Ovary (tissue), 10 donors: ENCODE measurements at regions of chr11 and their contacts with region 1.

Region 1: DNA sequence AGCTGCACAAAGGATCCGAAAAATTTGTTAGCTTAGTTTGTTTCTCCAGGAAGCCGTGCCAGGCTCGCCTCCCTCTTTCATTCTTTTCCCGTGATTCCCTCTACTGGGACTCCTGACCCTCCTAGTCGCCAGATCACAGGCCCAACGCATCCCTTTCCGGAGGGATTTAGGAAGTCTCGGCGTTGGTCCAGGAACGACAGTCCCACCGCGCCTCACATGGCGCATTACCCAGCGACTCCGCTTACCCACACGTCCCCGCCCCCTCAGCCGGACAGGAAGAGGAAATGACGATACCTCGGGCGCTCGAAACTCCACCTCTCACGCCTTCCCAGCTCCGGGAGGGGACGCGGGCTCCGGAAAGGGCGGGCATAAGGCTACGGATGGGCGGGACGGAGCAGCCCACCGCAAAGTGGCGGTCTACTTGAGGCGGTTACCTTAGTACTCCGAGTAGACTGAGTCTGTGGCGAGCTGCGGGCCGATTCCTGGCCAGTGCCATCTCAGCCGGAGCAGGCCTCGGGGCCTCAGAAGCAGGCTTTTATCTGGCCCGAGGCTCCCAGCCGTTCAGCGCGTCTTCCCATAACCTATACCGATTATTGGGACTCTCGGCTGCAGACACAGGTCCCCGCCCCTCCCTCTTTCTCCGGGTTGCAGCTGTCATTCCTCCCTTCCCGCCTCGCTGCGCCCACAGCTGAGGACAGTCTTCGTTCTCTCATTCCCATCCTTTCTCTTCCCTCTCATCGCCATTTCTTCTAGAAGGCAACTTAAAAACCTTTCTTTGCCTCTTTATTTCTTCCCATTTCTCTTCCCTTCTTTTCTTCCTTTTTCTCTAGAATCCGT is at the start of gene CCDC15:
- DNase-seq: peak; percentile 96 to 97 (median 96)
- H3K4me3 ChIP-seq: peak within 1 kb of the TSS; percentile 55
- H3K27ac ChIP-seq: peak within 1 kb of the TSS in 1 of 2 donors; percentile 70
- H3K4me1 ChIP-seq: peaks cover 2% of the 10 kb centered on the region
- H3K27me3 ChIP-seq: no peaks in the 10 kb centered on the region
- CTCF ChIP-seq: no peak
- EP300 ChIP-seq: no peak
- POLR2A ChIP-seq: peak; percentile 97
- total RNA-seq, gene CCDC15: 0.87 to 1.9 (median 1.4) TPM

Region 2: DNA sequence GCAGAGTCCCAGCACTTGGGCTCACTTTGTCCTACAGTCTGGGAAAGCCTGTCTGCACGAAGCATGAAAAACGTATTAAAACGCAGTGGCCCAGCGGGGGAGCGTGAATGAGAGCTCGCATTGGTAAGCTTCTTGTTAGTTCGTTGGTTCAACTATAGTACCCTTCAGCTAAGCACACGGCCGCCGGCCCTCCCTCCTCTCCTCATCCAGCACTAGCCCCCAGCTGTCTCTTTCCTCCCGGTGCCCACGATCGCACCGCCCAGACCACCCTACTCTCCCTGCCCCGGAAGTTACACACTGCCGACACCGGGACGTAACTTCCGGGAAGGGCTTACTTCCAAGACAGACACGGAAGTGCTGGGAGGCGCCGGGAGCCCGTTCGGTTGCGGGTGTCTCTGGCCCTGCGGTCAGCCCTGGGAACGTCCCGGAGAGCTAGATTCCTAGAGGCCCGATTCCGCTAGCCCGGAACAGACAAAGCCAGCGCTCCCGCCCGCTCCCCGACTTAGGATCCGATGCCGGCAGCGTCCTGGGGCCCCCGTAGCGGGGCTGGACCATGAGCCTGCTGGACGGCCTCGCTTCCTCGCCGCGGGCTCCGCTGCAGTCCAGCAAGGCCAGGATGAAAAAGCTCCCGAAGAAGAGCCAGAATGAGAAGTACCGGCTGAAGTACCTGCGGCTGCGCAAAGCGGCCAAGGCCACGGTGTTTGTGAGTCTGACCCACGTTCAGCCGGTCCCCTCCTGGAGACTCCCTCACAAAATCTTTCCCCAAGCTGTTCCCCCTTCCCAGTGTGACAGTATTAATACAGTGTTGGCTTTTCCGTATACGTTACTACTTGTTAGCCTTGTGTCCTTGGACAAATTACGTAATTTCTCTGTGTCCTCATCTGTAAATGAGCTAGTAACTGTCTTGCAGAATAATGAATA is 331.2 kb before region 1 on chr11 and contains the start of gene TBRG1:
- intact Hi-C with region 1: no loop called
- DNase-seq: peak; percentile 87 to 90 (median 87)
- H3K4me3 ChIP-seq: peak within 1 kb of the TSS; percentile 94
- H3K27ac ChIP-seq: peak within 1 kb of the TSS; percentile 65 to 87
- H3K4me1 ChIP-seq: no peaks in the 10 kb centered on the region
- H3K27me3 ChIP-seq: no peaks in the 10 kb centered on the region
- CTCF ChIP-seq: no peak
- EP300 ChIP-seq: no peak
- POLR2A ChIP-seq: peak; percentile 85
- total RNA-seq, gene TBRG1: 15.0 to 41.4 (median 24.2) TPM

Region 3: DNA sequence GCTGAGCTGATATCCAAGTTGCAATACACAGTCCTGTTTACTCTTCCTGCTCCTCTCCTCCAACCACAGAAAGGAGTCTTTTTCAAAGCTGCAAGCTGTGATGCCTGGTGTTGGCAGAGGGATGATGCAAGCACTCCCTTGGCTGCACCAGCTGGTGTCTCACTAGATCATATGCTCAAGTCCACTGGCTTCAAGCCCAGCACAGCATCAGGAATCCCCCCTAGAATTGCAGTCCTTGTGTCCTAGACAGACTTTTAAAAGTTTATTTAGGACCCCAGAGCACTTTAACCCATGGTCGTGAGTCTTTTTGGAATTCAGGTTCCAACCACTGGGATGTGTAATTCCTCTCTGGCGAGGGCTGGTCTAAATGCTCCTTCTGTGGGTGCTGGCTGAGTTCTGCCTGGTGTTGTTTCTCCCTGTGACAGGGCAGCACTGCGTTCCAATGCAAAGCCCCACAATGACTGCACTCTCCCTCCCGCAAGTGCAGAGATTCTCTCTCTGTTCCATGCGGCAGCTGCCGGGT is 36.8 kb before region 1 on chr11:
- intact Hi-C with region 1: no loop called
- DNase-seq: no peak
- H3K4me3 ChIP-seq: no peak overlapping the region
- H3K27ac ChIP-seq: no peak overlapping the region
- H3K4me1 ChIP-seq: peaks cover 5% of the 10 kb centered on the region
- H3K27me3 ChIP-seq: no peaks in the 10 kb centered on the region
- CTCF ChIP-seq: no peak
- EP300 ChIP-seq: no peak
- POLR2A ChIP-seq: no peak

Region 4: DNA sequence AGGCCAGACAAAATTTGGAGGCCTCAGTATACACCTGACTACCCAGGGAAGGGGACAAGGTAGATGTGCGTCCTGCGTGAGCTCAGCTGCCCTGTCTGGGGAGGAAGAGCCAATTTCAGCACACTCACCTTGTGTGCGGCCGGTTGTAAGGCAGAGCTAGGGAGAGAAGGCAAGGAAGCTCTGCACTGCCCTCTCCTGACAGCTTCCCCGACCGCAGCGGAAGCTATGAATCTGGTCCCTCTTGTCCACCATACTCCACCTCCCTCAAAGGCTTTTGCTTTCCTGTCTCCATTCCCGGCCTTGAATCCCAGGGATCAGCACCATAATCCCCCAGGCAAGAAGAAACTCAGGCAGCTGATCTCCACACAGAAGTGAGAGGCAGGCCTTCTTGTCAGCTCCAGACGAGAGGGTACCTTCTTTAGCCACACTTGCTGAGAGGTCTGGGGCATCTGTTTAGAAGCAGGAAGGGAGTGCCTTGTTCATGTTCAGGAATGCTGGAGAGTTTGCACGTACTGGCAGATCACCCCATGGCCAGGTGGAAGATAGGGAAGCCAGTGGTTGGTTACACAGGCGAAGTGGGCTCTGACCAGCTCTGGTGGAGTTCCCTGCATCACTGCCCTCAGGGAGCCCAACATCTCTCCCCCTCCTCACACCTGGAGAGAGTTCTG is 479.6 kb after region 1 on chr11:
- intact Hi-C with region 1: loop called in 1 of 4 experiments (anchors 10 kb)
- DNase-seq: peak in 4 of 5 donors; percentile 38 to 70 (median 50)
- H3K4me3 ChIP-seq: no peak overlapping the region
- H3K27ac ChIP-seq: no peak overlapping the region
- H3K4me1 ChIP-seq: no peaks in the 10 kb centered on the region
- H3K27me3 ChIP-seq: no peaks in the 10 kb centered on the region
- CTCF ChIP-seq: peak in 1 of 3 donors; percentile 8
- EP300 ChIP-seq: no peak
- POLR2A ChIP-seq: no peak